ENCODE measurements at regions of chr11 and their contacts with region 1.

Region 1: DNA sequence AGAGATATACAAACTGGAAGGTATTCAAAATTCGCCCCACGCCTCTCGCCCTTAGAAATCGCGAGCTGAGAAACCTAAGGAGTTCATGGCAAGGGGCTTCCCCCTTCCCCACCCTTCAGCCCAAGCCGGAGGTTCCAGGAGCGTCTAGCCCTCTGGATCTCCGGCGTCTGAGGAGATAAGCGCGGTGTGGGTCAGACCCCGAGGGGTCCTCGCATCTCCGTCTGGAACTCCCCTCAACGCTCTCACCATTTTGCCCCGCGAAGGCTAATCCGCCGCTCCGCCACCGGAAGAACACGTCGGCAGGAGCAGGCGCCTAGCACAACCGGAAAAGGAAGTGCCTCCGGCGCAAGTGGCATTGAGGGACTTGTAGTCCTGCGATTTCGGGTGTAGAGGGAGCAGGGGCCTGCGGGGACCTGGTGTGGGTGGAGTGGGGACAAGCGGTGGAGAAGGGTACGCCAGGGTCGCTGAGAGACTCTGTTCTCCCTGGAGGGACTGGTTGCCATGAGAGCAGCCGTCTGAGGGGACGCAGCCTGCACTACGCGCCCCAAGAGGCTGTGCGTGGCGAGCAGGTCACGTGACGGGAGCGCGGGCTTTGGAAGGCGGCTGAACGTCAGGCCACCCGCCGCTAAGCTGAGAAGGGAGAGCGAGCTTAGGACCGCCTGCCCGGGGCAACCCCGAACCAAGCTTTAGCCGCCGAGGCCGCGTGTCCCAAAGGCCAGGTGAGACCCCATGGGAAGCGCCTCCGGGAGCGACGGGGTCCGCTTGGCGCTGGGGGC is at the starts of genes FEN1 and TMEM258:
- DNase-seq: peak; percentile 91
- H3K4me3 Mint-ChIP-seq: peak within 1 kb of the TSS; percentile 97
- H3K27ac Mint-ChIP-seq: peak within 1 kb of the TSS; percentile 100
- H3K4me1 Mint-ChIP-seq: peaks cover 42% of the 10 kb centered on the region
- H3K27me3 Mint-ChIP-seq: no peaks in the 10 kb centered on the region
- total RNA-seq, gene FEN1: 74.7 to 75.9 TPM
- total RNA-seq, gene TMEM258: 166 to 167 TPM

Region 2: GRCh38 chr11:61695917-61696316 is 96.6 kb before region 1 on chr11:
- CTCF ChIA-PET with region 1: no interaction called
- intact Hi-C with region 1: no loop called
- DNase-seq: peak; percentile 98
- H3K4me3 Mint-ChIP-seq: no peak overlapping the region
- H3K27ac Mint-ChIP-seq: no peak overlapping the region
- H3K4me1 Mint-ChIP-seq: peaks cover 28% of the 10 kb centered on the region
- H3K27me3 Mint-ChIP-seq: no peaks in the 10 kb centered on the region

Region 3: GRCh38 chr11:61757213-61757862 is 35.2 kb before region 1 on chr11:
- CTCF ChIA-PET with region 1: no interaction called
- intact Hi-C with region 1: no loop called
- DNase-seq: no peak
- H3K4me3 Mint-ChIP-seq: no peak overlapping the region
- H3K27ac Mint-ChIP-seq: no peak overlapping the region
- H3K4me1 Mint-ChIP-seq: peaks cover 9% of the 10 kb centered on the region
- H3K27me3 Mint-ChIP-seq: peaks cover 8% of the 10 kb centered on the region

Region 4: GRCh38 chr11:61805146-61805545 is 12.6 kb after region 1 on chr11:
- CTCF ChIA-PET with region 1: interaction called, 21 read pairs
- intact Hi-C with region 1: no loop called
- DNase-seq: no peak
- H3K4me3 Mint-ChIP-seq: no peak overlapping the region
- H3K27ac Mint-ChIP-seq: no peak overlapping the region
- H3K4me1 Mint-ChIP-seq: no peaks in the 10 kb centered on the region
- H3K27me3 Mint-ChIP-seq: no peaks in the 10 kb centered on the region

Region 5: GRCh38 chr11:61834278-61835048 is 42.0 kb after region 1 on chr11:
- CTCF ChIA-PET with region 1: interaction called, 3 read pairs
- intact Hi-C with region 1: loop called (anchors 2 kb)
- DNase-seq: peak; percentile 85
- H3K4me3 Mint-ChIP-seq: no peak overlapping the region
- H3K27ac Mint-ChIP-seq: peak overlapping the region; percentile 84
- H3K4me1 Mint-ChIP-seq: peaks cover 29% of the 10 kb centered on the region
- H3K27me3 Mint-ChIP-seq: peaks cover 17% of the 10 kb centered on the region

Region 6: DNA sequence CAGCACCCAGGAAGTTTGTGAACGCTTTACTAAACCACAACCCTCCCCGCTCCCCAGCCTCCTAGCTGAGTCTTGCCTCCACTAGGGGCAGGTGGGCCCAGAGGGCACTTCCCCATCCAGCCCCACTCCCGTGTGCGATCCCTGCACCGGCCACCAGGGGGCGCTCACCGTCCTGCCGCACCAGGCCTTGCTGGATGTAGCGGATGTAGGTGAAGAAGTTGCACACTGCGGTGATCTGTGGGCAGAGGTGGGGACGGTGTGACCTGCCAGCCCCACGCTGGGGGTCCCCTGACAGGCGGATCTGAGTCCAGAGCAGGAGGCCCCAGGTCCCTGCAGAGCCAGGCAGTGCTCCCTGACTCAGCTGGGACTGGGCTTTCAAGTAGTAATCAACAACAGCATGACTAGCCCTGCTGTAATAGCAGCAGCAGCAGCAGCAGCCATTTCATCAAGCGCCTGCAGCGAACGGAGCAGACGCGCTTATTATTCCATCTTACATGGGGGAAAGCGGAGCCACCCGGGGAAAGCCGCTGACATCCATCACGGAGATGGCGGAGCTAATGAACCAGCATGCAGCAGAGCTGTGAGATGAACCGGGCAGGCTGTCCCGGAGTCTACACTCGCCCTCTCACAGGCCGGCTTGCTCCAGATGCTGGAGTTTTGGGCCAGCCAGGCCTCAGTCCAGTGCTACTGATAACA is 106.8 kb after region 1 on chr11:
- CTCF ChIA-PET with region 1: interaction called, 18 read pairs
- intact Hi-C with region 1: loop called (anchors 1 kb)
- DNase-seq: peak; percentile 93
- H3K4me3 Mint-ChIP-seq: no peak overlapping the region
- H3K27ac Mint-ChIP-seq: no peak overlapping the region
- H3K4me1 Mint-ChIP-seq: peaks cover 4% of the 10 kb centered on the region
- H3K27me3 Mint-ChIP-seq: no peaks in the 10 kb centered on the region

Region 7: GRCh38 chr11:61967116-61967923 is 174.8 kb after region 1 on chr11 and contains the start of gene FTH1:
- CTCF ChIA-PET with region 1: no interaction called
- intact Hi-C with region 1: loop called (anchors 2 kb)
- DNase-seq: peak; percentile 85
- H3K4me3 Mint-ChIP-seq: peak within 1 kb of the TSS; percentile 93
- H3K27ac Mint-ChIP-seq: peak within 1 kb of the TSS; percentile 94
- H3K4me1 Mint-ChIP-seq: peaks cover 67% of the 10 kb centered on the region
- H3K27me3 Mint-ChIP-seq: no peaks in the 10 kb centered on the region
- total RNA-seq, gene FTH1: 1,302 to 1,352 TPM

Region 8: GRCh38 chr11:62081378-62082291 is 289.1 kb after region 1 on chr11:
- CTCF ChIA-PET with region 1: interaction called, 10 read pairs
- intact Hi-C with region 1: loop called (anchors 5 kb)
- DNase-seq: peak; percentile 91
- H3K4me3 Mint-ChIP-seq: no peak overlapping the region
- H3K27ac Mint-ChIP-seq: no peak overlapping the region
- H3K4me1 Mint-ChIP-seq: peaks cover 8% of the 10 kb centered on the region
- H3K27me3 Mint-ChIP-seq: no peaks in the 10 kb centered on the region

Region 9: GRCh38 chr11:62123669-62124185 is 331.2 kb after region 1 on chr11 and contains the start of gene INCENP:
- CTCF ChIA-PET with region 1: no interaction called
- intact Hi-C with region 1: loop called (anchors 5 kb)
- DNase-seq: peak; percentile 98
- H3K4me3 Mint-ChIP-seq: peak within 1 kb of the TSS; percentile 82
- H3K27ac Mint-ChIP-seq: peak within 1 kb of the TSS; percentile 83
- H3K4me1 Mint-ChIP-seq: peaks cover 29% of the 10 kb centered on the region
- H3K27me3 Mint-ChIP-seq: no peaks in the 10 kb centered on the region
- total RNA-seq, gene INCENP: 156 to 161 TPM

Measured in activated naive CD4-positive, alpha-beta T cell treated with anti-CD3 and anti-CD28 coated beads for 36 hours (primary cell).